ENCODE measurements at regions of chr10 and their contacts with region 1.

Region 1: DNA sequence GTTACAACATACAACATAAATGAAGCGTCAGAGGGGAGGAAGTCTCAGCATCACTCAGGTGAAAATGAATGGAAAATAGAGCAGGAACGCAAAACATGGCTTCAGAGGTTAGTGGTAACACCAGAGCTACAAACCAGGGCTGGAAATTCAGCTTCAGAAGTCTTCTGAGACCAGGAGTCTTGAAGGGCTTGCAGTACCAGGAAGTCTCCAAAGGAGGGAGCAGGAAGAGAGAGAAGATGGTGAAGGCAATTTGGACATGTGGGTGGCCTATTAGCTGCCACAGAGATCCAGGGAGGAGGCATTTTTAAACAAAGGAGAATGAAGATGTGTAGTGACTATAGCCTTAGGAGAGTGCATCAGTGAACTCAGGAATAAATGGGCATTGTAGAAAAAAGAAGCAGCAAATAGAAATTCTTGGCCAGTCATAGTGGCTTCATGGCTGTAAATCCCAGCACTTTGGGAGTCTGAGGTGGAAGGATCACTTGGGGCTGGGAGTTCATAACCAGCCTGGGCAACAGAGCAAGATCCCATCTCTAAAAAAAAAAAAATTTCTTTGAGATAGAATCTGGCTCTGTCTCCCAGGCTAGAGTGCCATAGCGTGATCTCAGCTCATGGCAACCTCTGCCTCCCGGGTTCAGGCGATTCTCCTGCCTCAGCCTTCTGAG is 9.3 kb upstream of the TET1 start:
- DNase-seq: peak; percentile 78
- H3K4me3 ChIP-seq: no peak overlapping the region
- CTCF ChIP-seq: peak; percentile 96

Region 2: GRCh38 chr10:68471586-68472408 is 79.1 kb before region 1 on chr10 and contains the start of gene DNA2:
- in situ Hi-C with region 1: no loop called
- DNase-seq: peak; percentile 13
- H3K4me3 ChIP-seq: peak within 1 kb of the TSS; percentile 87
- CTCF ChIP-seq: no peak

Region 3: DNA sequence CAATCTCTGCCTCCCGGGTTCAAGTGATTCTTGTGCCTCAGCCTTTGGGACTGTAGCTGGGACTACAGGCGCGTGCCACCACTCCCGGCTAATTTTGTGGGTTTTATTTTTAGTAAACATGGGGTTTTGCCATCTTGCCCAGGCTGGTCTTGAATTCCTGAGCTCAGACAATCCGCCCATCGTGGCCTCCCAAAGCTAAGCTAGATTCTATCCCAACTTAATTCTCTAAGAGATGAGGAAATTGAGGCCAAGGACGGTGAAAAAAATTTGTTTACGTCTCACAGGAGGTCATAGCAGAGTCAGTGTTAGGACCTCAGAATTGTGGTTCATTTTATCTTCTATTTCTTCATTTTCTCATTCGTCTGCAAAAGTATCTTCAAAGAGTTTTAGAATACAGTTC is 176.3 kb after region 1 on chr10:
- in situ Hi-C with region 1: loop called (anchors 25 kb)
- DNase-seq: no peak
- H3K4me3 ChIP-seq: no peak overlapping the region
- CTCF ChIP-seq: no peak

Measured in astrocyte of the cerebellum (primary cell).